ENCODE measurements at regions of chr11 and their contacts with region 1.

Region 1: GRCh38 chr11:113289431-113290187 is 24.8 kb upstream of the TTC12 start:
- DNase-seq: no peak
- ATAC-seq: peak; percentile 85 to 88
- H3K4me3 ChIP-seq: no peak overlapping the region
- H3K27ac ChIP-seq: no peak overlapping the region
- H3K4me1 ChIP-seq: no peaks in the 10 kb centered on the region
- H3K27me3 ChIP-seq: peaks cover 8% of the 10 kb centered on the region
- CTCF ChIP-seq: peak; percentile 92

Region 2: GRCh38 chr11:112588252-112588694 is 701.3 kb before region 1 on chr11:
- intact Hi-C with region 1: loop called (anchors 5 kb)
- DNase-seq: peak; percentile 52
- ATAC-seq: peak; percentile 76 to 77
- H3K4me3 ChIP-seq: no peak overlapping the region
- H3K27ac ChIP-seq: no peak overlapping the region
- H3K4me1 ChIP-seq: peaks cover 6% of the 10 kb centered on the region
- H3K27me3 ChIP-seq: no peaks in the 10 kb centered on the region
- CTCF ChIP-seq: peak; percentile 70

Region 3: DNA sequence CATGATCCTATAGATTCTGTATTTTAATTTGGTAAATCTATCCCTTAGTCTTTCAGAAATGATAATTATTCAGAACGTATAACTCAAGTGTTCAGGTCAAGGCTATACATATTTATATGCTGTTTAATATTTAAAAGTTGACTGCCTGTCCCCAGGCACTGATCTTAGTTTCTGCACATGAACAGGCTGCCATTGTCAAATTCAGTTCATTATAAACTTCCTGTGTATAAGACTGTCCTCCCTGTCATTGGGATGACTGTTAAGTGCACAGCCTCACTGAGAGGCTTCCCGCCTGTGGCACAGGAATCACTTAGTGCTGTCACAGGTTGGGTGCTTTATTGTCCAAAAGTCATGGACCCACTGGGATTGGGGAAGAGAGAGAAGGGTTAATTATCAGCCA is 67.4 kb before region 1 on chr11:
- intact Hi-C with region 1: no loop called
- DNase-seq: no peak
- ATAC-seq: no peak
- H3K4me3 ChIP-seq: no peak overlapping the region
- H3K27ac ChIP-seq: no peak overlapping the region
- H3K4me1 ChIP-seq: no peaks in the 10 kb centered on the region
- H3K27me3 ChIP-seq: peaks cover 5% of the 10 kb centered on the region
- CTCF ChIP-seq: no peak

Measured in lower lobe of right lung (tissue), 2 donors.